ENCODE measurements at regions of chr1 and their contacts with region 1.

Region 1: GRCh38 chr1:18913065-18913835 is 10.9 kb upstream of the ALDH4A1 start:
- DNase-seq: peak; percentile 91
- CTCF ChIP-seq: peak; percentile 98

Region 2: GRCh38 chr1:18794561-18794960 is 118.7 kb before region 1 on chr1:
- CTCF ChIA-PET with region 1: no interaction called
- POLR2A ChIA-PET with region 1: no interaction called
- DNase-seq: no peak
- CTCF ChIP-seq: no peak

Region 3: DNA sequence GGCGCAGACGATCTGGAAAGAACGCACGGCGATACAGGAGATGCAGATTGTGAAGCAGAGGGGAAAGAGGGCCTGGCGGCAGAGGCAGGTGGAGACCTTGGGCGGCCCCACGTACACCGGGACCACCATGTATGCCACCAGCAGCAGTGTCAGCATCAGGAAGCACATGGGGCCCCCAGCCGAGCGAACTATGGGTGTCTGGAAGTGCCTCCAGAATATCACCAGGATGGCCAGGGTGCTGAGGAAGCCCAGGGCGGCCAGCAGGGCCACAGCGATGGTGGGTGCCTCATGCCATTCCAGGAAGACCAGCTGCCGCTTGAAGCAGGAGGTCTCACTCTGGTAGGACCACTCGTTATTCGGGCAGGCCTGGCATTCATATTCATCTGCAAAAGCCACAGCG is 73.1 kb before region 1 on chr1:
- CTCF ChIA-PET with region 1: no interaction called
- POLR2A ChIA-PET with region 1: no interaction called
- DNase-seq: no peak
- CTCF ChIP-seq: no peak

Region 4: DNA sequence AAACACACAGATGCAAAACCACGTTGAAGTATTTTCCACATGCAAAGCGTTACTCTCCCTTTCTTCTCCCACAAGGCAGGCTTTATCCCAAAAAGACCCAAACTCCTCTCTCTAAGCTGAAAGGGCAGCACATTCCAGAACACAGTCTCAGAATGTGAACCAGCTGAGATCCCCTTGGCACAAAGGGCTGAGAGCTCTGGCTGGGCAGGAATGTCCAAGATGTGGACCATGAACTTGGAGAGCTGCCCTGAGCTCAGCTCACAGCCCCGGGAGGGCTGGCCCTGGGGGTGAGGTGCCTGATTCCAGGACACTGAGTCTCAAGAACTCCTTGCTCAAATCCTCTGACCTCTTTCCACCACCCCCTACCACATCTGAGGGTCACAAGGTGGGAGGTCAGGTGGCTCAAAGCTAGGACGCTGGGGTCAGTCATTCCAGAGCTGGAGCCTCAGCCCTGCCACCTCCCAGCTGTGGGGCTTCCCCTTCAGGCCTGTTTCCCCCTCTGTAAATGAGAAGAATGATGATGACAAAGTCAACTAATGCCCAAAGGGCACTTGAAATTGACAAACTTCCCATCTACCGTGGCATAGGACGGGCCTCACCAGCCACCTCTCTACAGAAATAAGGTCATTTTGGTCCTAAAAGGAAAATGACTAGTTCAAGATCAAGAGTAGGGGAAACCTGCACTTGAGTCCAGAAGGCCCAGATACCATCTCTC is 22.4 kb before region 1 on chr1:
- CTCF ChIA-PET with region 1: interaction called, 25 read pairs
- POLR2A ChIA-PET with region 1: no interaction called
- DNase-seq: no peak
- CTCF ChIP-seq: no peak

Region 5: DNA sequence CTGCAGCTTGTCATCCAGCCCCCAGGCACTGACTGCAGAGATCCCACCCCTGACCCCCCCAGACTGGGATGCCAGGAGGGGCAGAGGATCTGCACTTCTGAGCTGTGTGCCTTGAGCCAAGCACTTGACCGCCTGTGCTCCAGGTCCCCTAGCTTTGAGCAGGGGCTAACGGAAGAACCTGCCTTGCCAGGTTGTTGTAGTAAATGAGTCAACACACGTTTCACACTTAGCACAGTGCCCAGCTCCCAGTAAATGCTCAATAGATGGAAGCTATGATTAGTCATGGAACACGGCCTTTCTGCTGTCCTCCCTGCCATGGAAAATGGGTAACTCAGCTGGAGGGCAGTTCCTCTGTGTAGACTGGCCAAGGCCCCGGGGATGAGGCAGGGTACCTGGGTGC is 19.1 kb after region 1 on chr1:
- CTCF ChIA-PET with region 1: interaction called, 101 read pairs
- POLR2A ChIA-PET with region 1: no interaction called
- DNase-seq: no peak
- CTCF ChIP-seq: no peak

Region 6: GRCh38 chr1:18949686-18950400 is 36.6 kb after region 1 on chr1:
- CTCF ChIA-PET with region 1: interaction called, 34 read pairs
- POLR2A ChIA-PET with region 1: no interaction called
- DNase-seq: peak; percentile 59
- CTCF ChIP-seq: peak; percentile 47

Region 7: GRCh38 chr1:19087737-19088594 is 174.7 kb after region 1 on chr1:
- CTCF ChIA-PET with region 1: interaction called, 29 read pairs
- POLR2A ChIA-PET with region 1: no interaction called
- DNase-seq: peak; percentile 55
- CTCF ChIP-seq: no peak